ENCODE measurements at regions of chr19 and their contacts with region 1.

Region 1: DNA sequence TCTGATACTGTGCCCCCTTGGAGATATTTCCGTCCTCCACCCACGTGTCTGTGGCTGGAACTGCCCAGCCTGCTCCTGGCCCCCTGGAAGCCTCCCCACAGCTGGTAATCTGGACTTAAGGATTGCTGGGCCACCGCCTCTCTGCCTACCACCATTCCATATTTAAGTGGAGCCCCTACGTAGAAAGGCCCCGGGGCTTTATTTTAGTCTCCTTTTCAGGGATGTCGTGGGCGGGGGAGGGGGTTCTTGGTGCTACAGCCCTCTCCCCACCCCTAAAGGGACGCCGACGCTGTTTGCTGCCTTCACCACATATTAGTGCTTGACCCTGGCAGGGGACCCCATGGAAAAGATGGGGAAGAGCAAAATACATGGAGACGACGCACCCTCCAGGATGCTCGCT is 2.7 kb upstream of the NOP53 start:
- DNase-seq: peak in 1 of 2 donors; percentile 75
- H3K4me3 ChIP-seq: peak overlapping the region; percentile 34 to 47
- H3K27ac ChIP-seq: peak overlapping the region; percentile 94 to 98
- H3K4me1 ChIP-seq: peaks cover 4 to 45% (median 30%) of the 10 kb centered on the region in 4 donors
- H3K27me3 ChIP-seq: no peaks in the 10 kb centered on the region
- CTCF ChIP-seq: no peak

Region 2: DNA sequence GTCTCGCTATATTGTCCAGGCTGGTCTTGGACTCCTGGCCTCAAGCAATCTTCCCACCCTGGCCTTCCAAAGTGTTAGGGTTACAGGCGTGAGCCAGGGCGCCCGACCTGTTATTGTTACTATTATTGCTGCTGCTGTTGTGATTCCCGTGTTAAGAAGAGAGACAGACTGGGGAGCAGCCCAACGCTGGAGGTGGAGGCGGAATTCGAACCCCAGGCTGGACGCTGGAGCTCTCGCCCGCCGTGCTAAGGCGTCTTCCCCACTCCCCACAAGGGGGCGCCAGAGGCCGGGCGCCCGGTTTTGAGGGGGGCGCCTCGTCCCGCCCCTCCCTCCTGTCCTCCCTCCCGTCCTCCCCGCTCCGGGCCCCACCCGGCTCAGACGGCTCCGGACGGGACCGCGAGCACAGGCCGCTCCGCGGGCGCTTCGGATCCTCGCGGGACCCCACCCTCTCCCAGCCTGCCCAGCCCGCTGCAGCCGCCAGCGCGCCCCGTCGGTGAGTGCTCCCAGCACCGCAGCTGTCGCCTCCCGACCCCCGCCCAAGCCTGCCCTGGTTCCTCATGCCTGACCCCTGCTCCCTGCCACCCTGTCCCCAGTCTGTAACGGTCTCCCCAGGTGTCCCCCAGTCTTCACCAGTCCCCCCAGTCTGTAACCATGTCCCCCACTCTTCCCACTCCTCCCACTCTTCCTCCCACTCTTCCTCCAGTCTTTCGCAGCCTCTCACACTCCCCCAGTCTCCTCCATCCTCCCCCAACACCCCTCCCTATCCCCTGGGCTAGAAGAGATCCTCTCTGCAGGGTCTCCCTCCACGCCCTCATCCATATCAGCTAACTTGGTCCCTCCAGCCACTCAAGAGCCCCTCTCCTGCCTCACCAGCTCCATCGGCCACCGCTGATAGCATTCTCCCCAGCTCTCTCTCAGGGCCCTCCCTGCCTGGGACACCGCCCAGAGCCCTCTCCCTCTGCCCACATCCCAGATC is 29.3 kb before region 1 on chr19 and contains the start of gene EHD2:
- intact Hi-C with region 1: loop called (anchors 1 kb)
- DNase-seq: peak; percentile 61 to 90
- H3K4me3 ChIP-seq: peak within 1 kb of the TSS; percentile 85 to 92
- H3K27ac ChIP-seq: peak within 1 kb of the TSS; percentile 91 to 93
- H3K4me1 ChIP-seq: peaks cover 5 to 44% (median 38%) of the 10 kb centered on the region in 4 donors
- H3K27me3 ChIP-seq: no peaks in the 10 kb centered on the region
- CTCF ChIP-seq: peak; percentile 98 to 99

Measured in tibial artery (tissue), 4 donors.